ENCODE measurements at regions of chr2 and their contacts with region 1.

Region 1: GRCh38 chr2:237421542-237422116 is 7.7 kb upstream of the COL6A3 start:
- DNase-seq: peak; percentile 73 to 86 (median 75)
- ATAC-seq: peak; percentile 73 to 91 (median 87)
- H3K4me3 ChIP-seq: peak overlapping the region in 7 of 12 donors; percentile 5 to 39 (median 23)
- H3K27ac ChIP-seq: peak overlapping the region in 7 of 12 donors; percentile 0 to 71 (median 41)
- H3K4me1 ChIP-seq: peaks cover 0 to 28% (median 13%) of the 10 kb centered on the region in 12 donors
- H3K27me3 ChIP-seq: no peaks in the 10 kb centered on the region
- CTCF ChIP-seq: peak; percentile 72 to 97 (median 82)
- POLR2A ChIP-seq: no peak

Region 2: DNA sequence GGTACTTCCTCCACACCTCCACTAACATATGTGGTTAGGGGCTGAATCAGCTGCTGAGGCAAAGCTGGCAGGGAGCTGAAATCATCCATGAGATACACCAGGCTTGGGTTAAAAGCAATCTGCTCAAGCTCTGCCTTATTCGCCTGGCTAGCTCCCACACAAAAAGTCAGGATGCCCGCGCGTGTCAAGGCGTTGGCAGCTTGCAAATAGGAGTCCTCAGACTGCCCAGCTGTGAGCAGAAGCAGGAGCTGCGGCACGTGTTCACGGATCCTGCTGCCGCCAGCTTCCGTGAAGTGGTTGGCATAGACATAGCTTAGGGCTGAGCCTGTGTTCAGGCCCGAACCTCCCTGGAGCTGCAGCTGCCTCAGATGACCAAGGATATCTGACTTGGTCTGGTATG is 43.0 kb before region 1 on chr2:
- intact Hi-C with region 1: no loop called
- DNase-seq: no peak
- ATAC-seq: no peak
- H3K4me3 ChIP-seq: no peak overlapping the region
- H3K27ac ChIP-seq: peak overlapping the region in 1 of 12 donors; percentile 82
- H3K4me1 ChIP-seq: no peaks in the 10 kb centered on the region
- H3K27me3 ChIP-seq: no peaks in the 10 kb centered on the region
- CTCF ChIP-seq: no peak
- POLR2A ChIP-seq: no peak

Region 3: GRCh38 chr2:237449193-237449881 is 27.7 kb after region 1 on chr2:
- intact Hi-C with region 1: loop called in 1 of 10 experiments (anchors 1 kb)
- DNase-seq: peak in 4 of 5 donors; percentile 50 to 88 (median 72)
- ATAC-seq: peak; percentile 86 to 91 (median 89)
- H3K4me3 ChIP-seq: peak overlapping the region in 1 of 12 donors; percentile 8
- H3K27ac ChIP-seq: peak overlapping the region; percentile 29 to 87 (median 74)
- H3K4me1 ChIP-seq: peaks cover 0 to 51% (median 30%) of the 10 kb centered on the region in 12 donors
- H3K27me3 ChIP-seq: peaks cover 0 to 3% (median 0%) of the 10 kb centered on the region in 9 donors
- CTCF ChIP-seq: peak in 1 of 12 donors; percentile 8
- POLR2A ChIP-seq: no peak

Region 4: GRCh38 chr2:237456200-237456843 is 34.7 kb after region 1 on chr2:
- intact Hi-C with region 1: loop called in 1 of 10 experiments (anchors 5 kb)
- DNase-seq: peak; percentile 73 to 88 (median 83)
- ATAC-seq: peak; percentile 85 to 94 (median 92)
- H3K4me3 ChIP-seq: no peak overlapping the region
- H3K27ac ChIP-seq: peak overlapping the region in 8 of 12 donors; percentile 22 to 68 (median 50)
- H3K4me1 ChIP-seq: peaks cover 0 to 31% (median 11%) of the 10 kb centered on the region in 12 donors
- H3K27me3 ChIP-seq: peaks cover 0 to 3% (median 0%) of the 10 kb centered on the region in 9 donors
- CTCF ChIP-seq: no peak
- POLR2A ChIP-seq: no peak

Region 5: DNA sequence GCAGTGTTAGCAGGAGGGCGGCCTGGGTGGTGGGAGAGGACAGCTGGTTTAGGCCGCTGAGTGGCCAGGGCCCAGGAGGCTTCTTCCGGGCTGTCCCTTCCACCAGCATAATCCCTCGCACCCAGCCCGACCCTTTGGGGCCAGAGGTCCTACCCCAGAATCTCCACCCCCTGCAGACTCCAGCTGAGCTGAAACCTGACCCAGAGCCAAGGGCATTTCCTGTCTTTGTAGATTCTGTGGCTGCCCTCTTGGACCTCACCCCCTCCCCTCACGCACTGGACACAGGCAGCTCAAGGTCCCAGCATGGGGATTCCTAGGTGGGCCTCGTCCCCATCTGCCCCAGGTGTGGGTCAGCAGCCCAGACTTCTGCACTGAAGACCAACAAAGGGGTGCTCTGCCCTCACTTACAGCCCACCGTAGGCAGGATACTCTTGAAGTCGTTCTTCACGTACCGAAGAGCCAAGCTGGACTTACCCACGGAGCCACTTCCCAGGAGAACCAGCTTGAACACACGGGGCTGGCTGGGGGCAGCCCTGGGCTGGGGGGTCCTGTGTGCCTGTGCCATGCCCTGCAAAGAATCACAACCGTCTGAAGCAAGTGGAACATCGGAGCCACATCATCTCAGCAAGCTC is 164.1 kb after region 1 on chr2:
- intact Hi-C with region 1: no loop called
- DNase-seq: peak in 1 of 5 donors; percentile 37
- ATAC-seq: no peak
- H3K4me3 ChIP-seq: no peak overlapping the region
- H3K27ac ChIP-seq: no peak overlapping the region
- H3K4me1 ChIP-seq: peaks cover 0 to 32% (median 22%) of the 10 kb centered on the region in 12 donors
- H3K27me3 ChIP-seq: peaks cover 0 to 2% (median 0%) of the 10 kb centered on the region in 9 donors
- CTCF ChIP-seq: no peak
- POLR2A ChIP-seq: no peak

Region 6: GRCh38 chr2:237935740-237936452 is 514.3 kb after region 1 on chr2:
- intact Hi-C with region 1: no loop called
- DNase-seq: peak in 2 of 5 donors; percentile 46 to 65
- ATAC-seq: peak in 3 of 4 donors; percentile 60 to 95 (median 82)
- H3K4me3 ChIP-seq: no peak overlapping the region
- H3K27ac ChIP-seq: peak overlapping the region in 1 of 12 donors; percentile 24
- H3K4me1 ChIP-seq: peaks cover 0 to 20% (median 1%) of the 10 kb centered on the region in 12 donors
- H3K27me3 ChIP-seq: no peaks in the 10 kb centered on the region
- CTCF ChIP-seq: no peak
- POLR2A ChIP-seq: no peak

Measured in heart left ventricle (tissue), 16 donors.